CD4-positive, alpha-beta memory T cell (primary cell): ENCODE measurements at regions of chr3 and their contacts with region 1.

Region 1: GRCh38 chr3:47164007-47164881 is at the start of gene SETD2:
- DNase-seq: peak; percentile 83 to 90 (median 85)
- H3K4me3 ChIP-seq: peak within 1 kb of the TSS; percentile 94 to 95
- H3K4me3 Mint-ChIP-seq: peak within 1 kb of the TSS; percentile 97 to 100 (median 98)
- H3K27ac ChIP-seq: peak within 1 kb of the TSS; percentile 85
- H3K27ac Mint-ChIP-seq: peak within 1 kb of the TSS; percentile 85 to 100 (median 99)
- H3K4me1 ChIP-seq: peaks cover 50% of the 10 kb centered on the region
- H3K4me1 Mint-ChIP-seq: peaks cover 34 to 58% (median 46%) of the 10 kb centered on the region in 4 donors
- H3K27me3 ChIP-seq: no peaks in the 10 kb centered on the region
- H3K27me3 Mint-ChIP-seq: peaks cover 0 to 1% of the 10 kb centered on the region in 2 donors
- total RNA-seq, gene SETD2: 74.0 to 74.1 TPM

Region 2: GRCh38 chr3:47035634-47036033 is 128.6 kb before region 1 on chr3:
- CTCF ChIA-PET with region 1: no interaction called
- POLR2A ChIA-PET with region 1: interaction called, 10 read pairs
- intact Hi-C with region 1: loop called (anchors 5 kb)
- DNase-seq: no peak
- H3K4me3 ChIP-seq: no peak overlapping the region
- H3K4me3 Mint-ChIP-seq: no peak overlapping the region
- H3K27ac ChIP-seq: no peak overlapping the region
- H3K27ac Mint-ChIP-seq: peak overlapping the region in 4 of 7 donors; percentile 49 to 79 (median 59)
- H3K4me1 ChIP-seq: peaks cover 21% of the 10 kb centered on the region
- H3K4me1 Mint-ChIP-seq: peaks cover 30 to 42% (median 35%) of the 10 kb centered on the region in 4 donors
- H3K27me3 ChIP-seq: no peaks in the 10 kb centered on the region
- H3K27me3 Mint-ChIP-seq: no peaks in the 10 kb centered on the region

Region 3: GRCh38 chr3:47145272-47145671 is 19.0 kb before region 1 on chr3:
- CTCF ChIA-PET with region 1: interaction called, 15 read pairs
- POLR2A ChIA-PET with region 1: interaction called, 28 read pairs
- intact Hi-C with region 1: no loop called
- DNase-seq: no peak
- H3K4me3 ChIP-seq: no peak overlapping the region
- H3K4me3 Mint-ChIP-seq: peak overlapping the region in 1 of 8 donors; percentile 34
- H3K27ac ChIP-seq: no peak overlapping the region
- H3K27ac Mint-ChIP-seq: peak overlapping the region in 1 of 7 donors; percentile 25
- H3K4me1 ChIP-seq: peaks cover 58% of the 10 kb centered on the region
- H3K4me1 Mint-ChIP-seq: peaks cover 38 to 77% (median 56%) of the 10 kb centered on the region in 4 donors
- H3K27me3 ChIP-seq: no peaks in the 10 kb centered on the region
- H3K27me3 Mint-ChIP-seq: no peaks in the 10 kb centered on the region

Region 4: DNA sequence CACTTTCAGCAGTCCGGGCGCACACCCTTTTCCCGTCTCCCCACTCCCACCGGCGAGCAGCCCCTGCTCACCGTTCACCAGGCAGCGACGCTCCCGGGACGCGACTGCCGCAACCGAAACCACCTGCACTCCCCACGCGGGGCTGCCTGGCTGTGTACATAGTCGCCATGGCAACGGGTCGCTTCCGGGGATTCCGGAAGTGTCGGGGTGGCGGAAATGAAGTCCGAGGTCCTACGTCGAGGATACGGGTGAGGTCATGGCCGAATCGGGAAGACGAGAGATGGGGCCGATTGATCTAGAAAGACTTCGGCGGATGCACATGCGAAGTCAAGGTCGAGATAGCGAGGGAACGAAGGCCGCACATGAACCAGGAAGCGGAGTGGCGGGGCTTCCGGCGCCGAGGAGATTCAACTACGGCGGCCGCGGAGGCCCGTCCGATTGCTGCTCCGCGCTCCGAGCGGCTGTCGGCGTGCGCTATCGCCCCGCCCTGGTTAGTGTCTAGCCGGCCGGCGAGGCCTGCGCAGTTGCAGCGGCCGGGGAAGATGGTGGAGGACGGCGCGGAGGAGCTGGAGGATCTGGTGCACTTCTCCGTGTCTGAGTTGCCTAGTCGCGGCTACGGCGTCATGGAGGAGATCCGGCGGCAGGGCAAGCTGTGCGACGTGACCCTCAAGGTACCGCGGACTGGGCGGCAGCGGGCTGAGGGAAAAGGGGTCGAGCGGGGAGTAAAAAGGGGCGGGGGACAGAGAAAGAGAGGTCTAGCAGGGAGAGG is 118.4 kb after region 1 on chr3 and contains the starts of genes KIF9 and KLHL18:
- CTCF ChIA-PET with region 1: interaction called, 7 read pairs
- POLR2A ChIA-PET with region 1: interaction called, 27 read pairs
- intact Hi-C with region 1: loop called (anchors 1 kb)
- DNase-seq: peak; percentile 97 to 98 (median 98)
- H3K4me3 ChIP-seq: peak within 1 kb of the TSS; percentile 94 to 99
- H3K4me3 Mint-ChIP-seq: peak within 1 kb of the TSS; percentile 95 to 100 (median 98)
- H3K27ac ChIP-seq: peak within 1 kb of the TSS; percentile 95
- H3K27ac Mint-ChIP-seq: peak within 1 kb of the TSS; percentile 98 to 100 (median 100)
- H3K4me1 ChIP-seq: peaks cover 40% of the 10 kb centered on the region
- H3K4me1 Mint-ChIP-seq: peaks cover 19 to 54% (median 38%) of the 10 kb centered on the region in 4 donors
- H3K27me3 ChIP-seq: no peaks in the 10 kb centered on the region
- H3K27me3 Mint-ChIP-seq: no peaks in the 10 kb centered on the region
- total RNA-seq, gene KIF9: 2.3 to 3.2 TPM
- total RNA-seq, gene KLHL18: 21.8 to 26.7 TPM

Region 5: GRCh38 chr3:47337656-47338055 is 173.4 kb after region 1 on chr3:
- CTCF ChIA-PET with region 1: no interaction called
- POLR2A ChIA-PET with region 1: no interaction called
- intact Hi-C with region 1: no loop called
- DNase-seq: no peak
- H3K4me3 ChIP-seq: no peak overlapping the region
- H3K4me3 Mint-ChIP-seq: no peak overlapping the region
- H3K27ac ChIP-seq: no peak overlapping the region
- H3K27ac Mint-ChIP-seq: peak overlapping the region in 3 of 7 donors; percentile 5 to 65 (median 38)
- H3K4me1 ChIP-seq: no peaks in the 10 kb centered on the region
- H3K4me1 Mint-ChIP-seq: no peaks in the 10 kb centered on the region
- H3K27me3 ChIP-seq: no peaks in the 10 kb centered on the region
- H3K27me3 Mint-ChIP-seq: no peaks in the 10 kb centered on the region

Region 6: DNA sequence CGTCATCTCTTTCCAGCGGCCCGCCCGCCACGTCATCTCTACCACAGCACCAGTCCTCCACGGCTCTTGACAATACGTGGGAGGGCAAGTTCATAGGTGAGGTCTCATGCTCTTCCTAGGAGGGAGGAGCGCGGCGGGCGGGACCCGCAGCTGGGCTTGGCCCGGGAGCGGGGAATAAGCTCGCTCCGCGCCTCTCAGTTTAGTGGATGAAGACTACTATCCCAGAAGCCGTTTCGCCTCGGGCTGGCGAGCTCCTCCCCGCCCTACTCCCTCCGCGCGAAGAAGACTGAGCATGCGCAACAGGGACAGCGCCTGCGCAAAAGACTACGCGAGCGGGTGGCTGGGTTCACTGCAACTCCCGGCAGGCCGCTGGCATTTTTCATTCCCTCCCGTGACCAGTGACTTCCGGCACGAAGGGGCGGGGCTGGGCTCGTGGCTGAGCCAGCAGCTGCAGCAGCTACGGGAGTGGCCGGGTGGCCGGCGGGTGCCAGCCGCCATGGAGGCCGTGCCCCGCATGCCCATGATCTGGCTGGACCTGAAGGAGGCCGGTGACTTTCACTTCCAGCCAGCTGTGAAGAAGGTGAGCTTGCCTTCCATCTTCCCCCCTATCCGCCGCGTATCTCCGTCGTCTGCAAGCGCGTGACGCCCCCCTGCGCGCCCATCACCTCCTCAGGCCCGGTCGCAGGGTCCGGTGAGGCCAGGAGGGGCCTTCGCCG is 216.5 kb after region 1 on chr3 and contains the start of gene PTPN23:
- CTCF ChIA-PET with region 1: interaction called, 4 read pairs
- POLR2A ChIA-PET with region 1: interaction called, 16 read pairs
- intact Hi-C with region 1: loop called (anchors 2 kb)
- DNase-seq: peak; percentile 98 to 99 (median 98)
- H3K4me3 ChIP-seq: peak within 1 kb of the TSS; percentile 88 to 97
- H3K4me3 Mint-ChIP-seq: peak within 1 kb of the TSS; percentile 99
- H3K27ac ChIP-seq: peak within 1 kb of the TSS; percentile 90
- H3K27ac Mint-ChIP-seq: peak within 1 kb of the TSS; percentile 95 to 100 (median 100)
- H3K4me1 ChIP-seq: peaks cover 43% of the 10 kb centered on the region
- H3K4me1 Mint-ChIP-seq: peaks cover 26 to 59% (median 40%) of the 10 kb centered on the region in 4 donors
- H3K27me3 ChIP-seq: no peaks in the 10 kb centered on the region
- H3K27me3 Mint-ChIP-seq: no peaks in the 10 kb centered on the region
- total RNA-seq, gene PTPN23: 50.0 to 53.9 TPM

Region 7: DNA sequence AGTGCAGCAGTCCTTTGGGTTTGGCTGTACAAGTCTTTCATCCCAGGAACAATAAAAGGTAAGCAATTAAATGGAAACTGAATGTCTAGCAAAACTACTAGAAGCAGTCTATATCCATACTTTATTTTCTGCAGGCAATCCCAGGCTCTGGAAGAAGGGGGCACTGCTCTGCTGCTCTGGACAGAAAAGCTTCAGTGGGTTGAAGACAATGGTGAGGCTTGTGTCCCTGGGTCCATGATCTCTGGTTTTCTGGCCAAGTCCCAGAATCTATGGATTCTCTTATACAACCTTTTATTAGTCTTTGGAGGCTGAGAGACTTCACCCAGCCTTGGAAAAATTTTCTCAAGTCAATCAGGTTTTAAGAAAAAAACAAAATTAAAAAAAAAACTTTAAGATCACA is 275.9 kb after region 1 on chr3:
- CTCF ChIA-PET with region 1: no interaction called
- POLR2A ChIA-PET with region 1: no interaction called
- intact Hi-C with region 1: no loop called
- DNase-seq: no peak
- H3K4me3 ChIP-seq: no peak overlapping the region
- H3K4me3 Mint-ChIP-seq: no peak overlapping the region
- H3K27ac ChIP-seq: no peak overlapping the region
- H3K27ac Mint-ChIP-seq: peak overlapping the region in 3 of 7 donors; percentile 13 to 64 (median 25)
- H3K4me1 ChIP-seq: no peaks in the 10 kb centered on the region
- H3K4me1 Mint-ChIP-seq: peaks cover 4 to 8% (median 6%) of the 10 kb centered on the region in 4 donors
- H3K27me3 ChIP-seq: no peaks in the 10 kb centered on the region
- H3K27me3 Mint-ChIP-seq: no peaks in the 10 kb centered on the region

Region 8: DNA sequence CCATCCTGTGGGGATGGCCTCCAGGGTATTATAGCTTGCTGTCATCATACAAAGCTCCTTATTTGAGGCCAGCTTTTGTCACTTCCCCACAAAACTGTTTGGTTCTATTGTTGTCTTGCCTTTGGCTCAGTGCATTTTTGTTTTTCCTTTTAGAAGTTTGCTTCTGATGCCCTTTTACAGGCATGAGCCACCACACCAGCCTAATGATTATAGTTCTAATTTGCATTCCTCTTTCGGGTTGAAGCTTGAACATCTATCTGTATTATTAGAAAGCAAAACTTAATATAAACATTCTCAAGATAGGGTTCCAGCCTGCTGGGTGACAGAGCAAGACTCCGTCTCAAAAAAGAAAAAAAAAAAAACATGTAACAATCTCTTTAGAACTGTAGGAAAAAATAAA is 577.7 kb after region 1 on chr3:
- CTCF ChIA-PET with region 1: no interaction called
- POLR2A ChIA-PET with region 1: no interaction called
- intact Hi-C with region 1: no loop called
- DNase-seq: no peak
- H3K4me3 ChIP-seq: no peak overlapping the region
- H3K4me3 Mint-ChIP-seq: no peak overlapping the region
- H3K27ac ChIP-seq: no peak overlapping the region
- H3K27ac Mint-ChIP-seq: peak overlapping the region in 1 of 7 donors; percentile 23
- H3K4me1 ChIP-seq: no peaks in the 10 kb centered on the region
- H3K4me1 Mint-ChIP-seq: peaks cover 10 to 27% (median 13%) of the 10 kb centered on the region in 4 donors
- H3K27me3 ChIP-seq: no peaks in the 10 kb centered on the region
- H3K27me3 Mint-ChIP-seq: no peaks in the 10 kb centered on the region

Region 9: GRCh38 chr3:47961815-47962618 is 797.8 kb after region 1 on chr3:
- CTCF ChIA-PET with region 1: no interaction called
- POLR2A ChIA-PET with region 1: no interaction called
- intact Hi-C with region 1: no loop called
- DNase-seq: peak; percentile 32 to 58 (median 50)
- H3K4me3 ChIP-seq: no peak overlapping the region
- H3K4me3 Mint-ChIP-seq: peak overlapping the region in 7 of 8 donors; percentile 32 to 79 (median 43)
- H3K27ac ChIP-seq: no peak overlapping the region
- H3K27ac Mint-ChIP-seq: peak overlapping the region; percentile 77 to 90 (median 85)
- H3K4me1 ChIP-seq: peaks cover 21% of the 10 kb centered on the region
- H3K4me1 Mint-ChIP-seq: peaks cover 28 to 31% (median 30%) of the 10 kb centered on the region in 4 donors
- H3K27me3 ChIP-seq: no peaks in the 10 kb centered on the region
- H3K27me3 Mint-ChIP-seq: no peaks in the 10 kb centered on the region